ENCODE measurements at regions of chr1 and their contacts with region 1.

Region 1: GRCh38 chr1:28208818-28209441 is 23.9 kb downstream of the DNAJC8 start:
- DNase-seq: peak; percentile 82
- H3K4me3 ChIP-seq: no peak overlapping the region
- H3K27ac ChIP-seq: peak overlapping the region in 1 of 8 donors; percentile 32
- H3K4me1 ChIP-seq: peaks cover 0 to 11% (median 5%) of the 10 kb centered on the region in 6 donors
- H3K27me3 ChIP-seq: no peaks in the 10 kb centered on the region
- CTCF ChIP-seq: peak; percentile 54 to 79 (median 72)
- POLR2A ChIP-seq: no peak

Region 2: GRCh38 chr1:27858072-27858958 is 350.6 kb before region 1 on chr1:
- intact Hi-C with region 1: loop called (anchors 10 kb)
- DNase-seq: peak; percentile 95
- H3K4me3 ChIP-seq: peak overlapping the region in 2 of 8 donors; percentile 5 to 46
- H3K27ac ChIP-seq: peak overlapping the region in 7 of 8 donors; percentile 9 to 85 (median 75)
- H3K4me1 ChIP-seq: peaks cover 4 to 34% (median 24%) of the 10 kb centered on the region in 6 donors
- H3K27me3 ChIP-seq: no peaks in the 10 kb centered on the region
- CTCF ChIP-seq: peak; percentile 91 to 99 (median 98)
- POLR2A ChIP-seq: no peak

Region 3: DNA sequence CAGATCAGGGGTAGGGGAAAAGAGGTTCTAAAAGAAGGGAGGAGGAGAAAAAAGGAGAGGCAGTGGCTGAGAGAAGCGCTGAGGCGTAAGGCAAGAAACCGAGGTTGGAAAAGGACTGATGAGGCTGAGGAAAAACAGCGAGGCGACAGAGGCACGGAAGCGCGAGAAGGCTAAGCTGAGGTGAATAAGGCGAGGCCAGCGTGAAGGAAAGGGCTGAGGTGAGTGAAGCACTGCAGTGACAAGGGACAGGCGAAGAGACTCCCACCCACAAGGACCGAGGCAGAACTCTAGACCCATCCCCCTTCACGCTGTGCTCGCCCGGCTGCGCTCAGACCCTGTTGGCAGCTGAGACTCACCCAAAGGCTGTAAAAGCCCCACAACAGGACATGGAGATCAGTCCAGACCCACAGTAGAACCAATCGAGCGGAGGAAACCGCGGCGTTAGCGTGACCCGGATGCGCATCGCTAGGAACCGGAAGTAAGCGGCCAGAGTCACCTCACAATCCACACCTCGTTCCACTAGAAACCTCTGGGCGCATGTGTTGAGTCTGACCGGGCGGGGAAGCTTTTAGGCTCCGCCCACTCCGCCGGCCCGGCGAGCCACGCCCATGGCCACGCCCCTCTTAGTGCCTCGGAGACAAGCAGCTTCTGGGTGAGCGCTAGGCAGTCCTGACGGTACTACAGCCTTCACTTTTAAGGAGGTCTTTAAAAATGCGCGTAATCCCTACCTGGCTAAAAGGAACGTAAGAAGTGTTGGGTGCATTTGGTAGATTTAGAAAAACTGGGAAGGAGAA is 120.6 kb before region 1 on chr1 and contains the start of gene EYA3:
- intact Hi-C with region 1: loop called (anchors 2 kb)
- DNase-seq: peak; percentile 99
- H3K4me3 ChIP-seq: peak within 1 kb of the TSS; percentile 69 to 83 (median 78)
- H3K27ac ChIP-seq: peak within 1 kb of the TSS; percentile 69 to 95 (median 92)
- H3K4me1 ChIP-seq: peaks cover 7 to 66% (median 46%) of the 10 kb centered on the region in 6 donors
- H3K27me3 ChIP-seq: no peaks in the 10 kb centered on the region
- CTCF ChIP-seq: peak in 4 of 11 experiments; percentile 32 to 55 (median 40)
- POLR2A ChIP-seq: no peak
- total RNA-seq, gene EYA3: 16.5 to 26.4 (median 21.8) TPM

Region 4: DNA sequence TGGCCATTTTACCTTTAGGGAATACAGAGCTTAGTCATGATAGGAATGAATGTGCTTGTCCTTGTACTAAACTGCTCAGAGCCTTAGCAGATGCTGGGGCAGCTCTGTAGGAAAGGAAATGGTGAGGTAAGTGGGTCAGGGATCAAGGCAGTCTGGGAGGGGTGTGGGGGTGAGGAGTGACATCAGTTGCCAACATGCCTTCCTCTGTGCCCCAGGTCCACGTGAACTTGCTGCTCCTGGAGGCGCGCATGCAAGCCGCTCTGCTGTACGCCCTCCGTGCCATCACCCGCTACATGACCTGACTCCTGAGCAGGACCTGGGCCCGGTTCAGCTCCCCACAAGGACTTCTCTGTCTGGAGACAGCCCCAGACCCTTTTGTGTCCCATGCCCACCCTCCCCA is 71.6 kb after region 1 on chr1:
- intact Hi-C with region 1: no loop called
- DNase-seq: no peak
- H3K4me3 ChIP-seq: no peak overlapping the region
- H3K27ac ChIP-seq: peak overlapping the region in 5 of 8 donors; percentile 1 to 71 (median 63)
- H3K4me1 ChIP-seq: peaks cover 0 to 48% (median 27%) of the 10 kb centered on the region in 6 donors
- H3K27me3 ChIP-seq: no peaks in the 10 kb centered on the region
- CTCF ChIP-seq: no peak
- POLR2A ChIP-seq: no peak

Region 5: GRCh38 chr1:28437934-28438699 is 229.2 kb after region 1 on chr1:
- intact Hi-C with region 1: no loop called
- DNase-seq: peak; percentile 73
- H3K4me3 ChIP-seq: peak overlapping the region; percentile 0 to 62 (median 32)
- H3K27ac ChIP-seq: peak overlapping the region in 7 of 8 donors; percentile 62 to 79 (median 76)
- H3K4me1 ChIP-seq: peaks cover 0 to 40% (median 19%) of the 10 kb centered on the region in 6 donors
- H3K27me3 ChIP-seq: no peaks in the 10 kb centered on the region
- CTCF ChIP-seq: no peak
- POLR2A ChIP-seq: peak in 1 of 3 donors; percentile 79

Measured in spleen (tissue), 13 donors.